Activated T-helper 2 cell treated with anti-CD3 and anti-CD28 coated beads, Interferon-gamma antibody, Interleukin-2, Interleukin-4, amounts not matched to agents 10 μg/mL and 5 μg/mL and 100 μg/mL, durations not matched to agents 14 hours and 24 hours and 36 hours (primary cell): ENCODE measurements at regions of chr5 and their contacts with region 1.

Region 1: GRCh38 chr5:90474235-90475109 is at the starts of genes MBLAC2 and POLR3G:
- DNase-seq: peak; percentile 88
- H3K4me3 Mint-ChIP-seq: peak within 1 kb of the TSS; percentile 90
- H3K27ac Mint-ChIP-seq: peak within 1 kb of the TSS; percentile 87
- H3K4me1 Mint-ChIP-seq: peaks cover 35% of the 10 kb centered on the region
- H3K27me3 Mint-ChIP-seq: no peaks in the 10 kb centered on the region
- total RNA-seq, gene MBLAC2: 6.1 and 6.4 TPM in 2 replicates
- total RNA-seq, gene POLR3G: 17.1 and 18.6 TPM in 2 replicates

Region 2: GRCh38 chr5:89948977-89949376 is 525.5 kb before region 1 on chr5:
- intact Hi-C with region 1: no loop called
- DNase-seq: no peak
- H3K4me3 Mint-ChIP-seq: no peak overlapping the region
- H3K27ac Mint-ChIP-seq: no peak overlapping the region
- H3K4me1 Mint-ChIP-seq: no peaks in the 10 kb centered on the region
- H3K27me3 Mint-ChIP-seq: no peaks in the 10 kb centered on the region

Region 3: DNA sequence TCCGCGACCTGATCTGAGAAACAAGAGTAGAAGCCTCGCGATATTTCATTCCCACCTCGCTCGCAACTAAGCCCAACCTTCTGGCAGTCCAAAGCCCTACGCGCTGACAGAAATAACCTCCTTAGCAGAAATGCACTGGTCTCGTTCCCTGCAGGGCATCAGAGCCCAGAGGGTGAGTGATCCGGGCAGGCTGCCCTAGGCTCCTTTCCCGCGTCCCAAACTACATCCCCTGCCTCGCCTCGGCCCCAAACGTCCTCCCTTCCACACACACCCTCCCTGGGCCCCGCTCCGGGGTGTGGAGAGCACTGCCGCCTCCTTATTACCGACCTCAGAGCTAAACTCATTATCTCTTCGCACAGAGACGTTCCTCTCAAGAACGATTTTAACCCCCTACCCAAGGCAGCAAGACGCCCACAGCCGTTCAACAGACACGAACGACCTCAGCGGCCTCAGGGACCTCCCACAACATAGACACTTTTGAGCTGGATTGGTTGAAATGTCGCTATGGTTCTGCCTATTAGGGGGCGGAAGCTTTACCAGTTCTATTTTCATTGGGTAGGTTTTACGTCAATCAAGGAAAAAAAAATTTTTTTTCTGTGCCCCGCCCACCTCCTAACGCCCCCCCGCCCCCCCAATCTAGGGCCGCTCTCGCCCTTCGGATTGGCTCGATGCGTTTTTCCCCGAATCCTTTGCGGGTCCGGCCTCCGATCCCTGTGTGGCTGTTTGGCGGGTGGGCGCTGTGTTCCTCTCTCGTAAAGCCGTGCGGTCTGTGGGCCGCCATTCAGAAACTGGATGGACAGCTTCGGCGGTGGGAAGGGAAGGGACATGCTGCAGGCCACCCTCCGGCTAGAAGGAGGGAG is 64.9 kb before region 1 on chr5 and contains the start of gene CETN3:
- intact Hi-C with region 1: loop called (anchors 1 kb)
- DNase-seq: peak; percentile 88
- H3K4me3 Mint-ChIP-seq: no peak within 1 kb of the TSS
- H3K27ac Mint-ChIP-seq: no peak within 1 kb of the TSS
- H3K4me1 Mint-ChIP-seq: peaks cover 16% of the 10 kb centered on the region
- H3K27me3 Mint-ChIP-seq: peaks cover 2% of the 10 kb centered on the region
- total RNA-seq, gene CETN3: 44.4 and 49.2 TPM in 2 replicates

Region 4: GRCh38 chr5:90590170-90590705 is 115.8 kb after region 1 on chr5:
- intact Hi-C with region 1: no loop called
- DNase-seq: no peak
- H3K4me3 Mint-ChIP-seq: no peak overlapping the region
- H3K27ac Mint-ChIP-seq: no peak overlapping the region
- H3K4me1 Mint-ChIP-seq: peaks cover 3% of the 10 kb centered on the region
- H3K27me3 Mint-ChIP-seq: peaks cover 1% of the 10 kb centered on the region

Region 5: GRCh38 chr5:90767710-90768109 is 293.2 kb after region 1 on chr5:
- intact Hi-C with region 1: no loop called
- DNase-seq: no peak
- H3K4me3 Mint-ChIP-seq: no peak overlapping the region
- H3K27ac Mint-ChIP-seq: no peak overlapping the region
- H3K4me1 Mint-ChIP-seq: no peaks in the 10 kb centered on the region
- H3K27me3 Mint-ChIP-seq: peaks cover 1% of the 10 kb centered on the region